ENCODE measurements at regions of chr22 and their contacts with region 1.

Region 1: DNA sequence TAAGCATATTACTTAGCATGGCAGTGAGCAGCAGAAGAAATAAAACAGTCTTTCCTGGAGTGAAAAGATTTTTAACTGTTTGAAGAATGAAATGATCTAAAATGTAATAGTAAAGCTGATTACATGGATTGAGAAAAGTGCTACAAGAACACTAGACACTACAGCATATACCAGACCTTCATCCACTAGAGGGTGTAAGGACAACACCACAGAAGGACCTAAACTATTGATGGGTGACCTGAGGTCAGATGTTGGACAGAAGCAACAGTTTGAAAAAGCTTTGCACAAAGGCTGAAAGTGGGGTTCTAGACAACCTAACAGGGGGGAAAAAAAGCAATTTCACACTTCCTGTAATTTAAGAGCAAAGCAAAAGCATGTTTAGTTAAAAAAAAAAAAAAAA is 97.7 kb downstream of the RBFOX2 start:
- DNase-seq: peak in 7 of 42 donors; percentile 15 to 71 (median 40)

Region 2: DNA sequence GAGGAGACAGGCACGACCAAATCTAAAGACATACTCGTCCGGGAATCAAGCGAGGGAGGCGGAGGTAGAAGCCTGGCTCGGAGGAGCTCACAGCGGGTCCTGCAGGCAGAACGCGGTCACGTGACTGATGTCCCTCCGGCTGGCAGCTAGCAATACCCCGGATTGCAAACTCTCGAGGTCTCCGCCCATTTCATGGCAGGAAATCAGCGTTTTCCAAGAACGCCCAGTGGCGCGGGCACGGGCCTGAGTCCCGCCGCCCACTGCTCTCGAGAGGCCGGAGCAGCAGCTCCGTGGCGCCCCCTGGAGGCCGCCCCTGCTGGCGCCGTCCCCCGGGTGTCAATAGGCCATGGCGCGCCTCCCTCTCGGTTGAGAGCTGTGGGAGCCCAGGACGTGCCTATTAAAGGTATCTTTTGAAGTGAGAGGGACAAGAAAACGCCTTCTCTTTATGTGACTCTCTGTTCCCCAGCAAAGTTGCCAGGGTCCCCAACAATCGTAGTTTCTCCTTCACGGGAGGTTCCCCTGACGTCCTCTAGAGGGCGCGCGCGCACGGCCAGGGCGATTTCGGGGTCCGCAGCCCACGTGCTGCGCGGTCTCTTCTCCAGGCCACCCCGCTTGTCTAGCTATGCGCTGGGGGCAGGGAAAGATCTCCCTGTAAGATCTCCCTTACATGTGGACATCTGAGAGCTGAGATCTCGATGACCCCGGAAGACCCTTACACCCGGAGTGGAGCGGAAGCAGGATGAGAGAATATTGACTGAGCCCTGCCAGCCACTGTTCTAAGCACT is 135.0 kb after region 1 on chr22:
- intact Hi-C with region 1: loop called (anchors 5 kb)
- DNase-seq: peak; percentile 75 to 95 (median 86)

Region 3: DNA sequence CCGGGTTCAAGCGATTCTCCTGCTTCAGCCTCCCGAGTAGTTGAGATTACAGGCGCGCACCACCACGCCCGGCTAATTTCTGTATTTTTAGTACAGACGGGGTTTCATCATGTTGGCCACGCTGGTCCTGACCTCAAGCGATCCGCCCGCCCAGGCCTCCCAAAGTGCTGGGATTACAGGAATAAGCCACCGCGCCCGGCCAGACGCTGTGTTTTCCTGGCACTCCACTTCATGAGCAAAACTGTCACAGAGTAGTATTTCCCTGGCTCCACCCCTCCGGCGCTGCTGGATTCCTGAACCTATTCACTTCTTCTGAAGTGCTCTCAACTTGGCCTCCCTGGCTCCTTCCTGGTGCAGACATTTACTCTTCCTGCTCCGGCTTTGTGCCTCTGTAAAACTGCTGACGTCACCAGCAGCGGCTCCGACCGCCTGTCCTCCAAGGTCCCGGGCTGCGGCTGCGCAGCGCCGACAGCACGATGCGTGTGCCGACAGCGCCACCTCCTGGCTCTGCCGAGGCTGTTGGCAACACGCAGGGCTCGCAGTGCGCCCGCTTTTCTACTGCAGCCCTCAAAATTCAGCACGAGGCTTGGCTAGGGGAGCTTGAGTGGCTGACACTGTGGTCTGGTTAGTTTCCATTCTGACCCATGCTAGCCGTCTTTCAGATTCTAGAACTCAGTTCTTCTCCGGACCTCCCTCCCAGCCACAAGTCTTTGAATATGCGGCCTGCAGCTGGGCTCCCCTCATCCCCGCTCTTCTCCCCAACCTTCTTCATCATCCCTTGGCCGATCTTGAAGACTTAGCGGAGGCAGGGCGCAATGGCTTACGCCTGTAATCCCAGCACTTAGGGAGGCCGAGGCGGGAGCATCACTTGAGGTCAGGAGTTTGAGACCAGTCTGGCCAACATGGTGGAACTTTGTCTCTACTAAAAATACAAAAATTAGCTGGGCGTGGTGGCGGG is 193.0 kb after region 1 on chr22:
- intact Hi-C with region 1: loop called (anchors 5 kb)
- DNase-seq: peak; percentile 80 to 96 (median 93)

Measured in head of caudate nucleus (tissue), 42 donors.